Aorta (tissue), 5 donors: ENCODE measurements at regions of chr11 and their contacts with region 1.

Region 1: DNA sequence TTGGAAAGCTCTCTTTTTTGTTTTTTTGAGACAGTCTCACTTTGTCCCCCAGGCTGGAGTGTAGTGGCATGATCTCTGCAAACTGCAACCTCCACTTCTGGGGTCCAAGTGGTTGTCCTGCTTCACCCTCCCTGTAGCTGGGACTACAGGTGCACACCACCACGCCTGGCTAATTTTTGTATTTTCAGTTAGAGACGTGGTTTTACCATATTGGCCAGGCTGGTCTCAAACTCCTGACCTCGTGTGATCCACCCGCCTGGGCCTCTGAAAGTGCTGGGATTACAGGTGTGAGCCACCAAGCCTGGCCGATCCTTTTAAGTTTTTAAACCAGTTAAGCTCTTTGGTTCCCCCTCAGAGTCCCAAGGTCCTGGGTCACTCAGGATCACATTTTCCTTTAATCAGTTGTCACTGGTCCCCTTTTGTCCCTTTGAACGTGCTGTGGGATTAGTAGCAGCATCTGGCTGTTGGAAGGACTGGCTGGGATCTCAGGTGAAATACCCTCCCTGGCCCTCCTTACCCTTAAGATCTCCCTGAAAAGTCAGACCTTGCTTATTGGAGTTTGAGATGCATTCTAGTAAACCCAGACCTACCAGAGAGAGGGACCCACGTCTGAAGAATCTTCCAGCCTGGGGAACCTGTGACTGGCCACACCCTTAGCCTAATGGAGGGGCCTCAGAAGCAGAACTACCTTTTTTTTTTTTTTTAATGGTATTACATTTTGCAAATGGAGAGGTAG is 8.1 kb downstream of the MALAT1 start:
- DNase-seq: peak; percentile 69 to 78
- ATAC-seq: peak; percentile 53
- H3K4me3 ChIP-seq: no peak overlapping the region
- H3K27ac ChIP-seq: peak overlapping the region; percentile 50 to 59
- H3K4me1 ChIP-seq: peaks cover 0 to 2% of the 10 kb centered on the region in 2 donors
- H3K27me3 ChIP-seq: no peaks in the 10 kb centered on the region

Region 2: DNA sequence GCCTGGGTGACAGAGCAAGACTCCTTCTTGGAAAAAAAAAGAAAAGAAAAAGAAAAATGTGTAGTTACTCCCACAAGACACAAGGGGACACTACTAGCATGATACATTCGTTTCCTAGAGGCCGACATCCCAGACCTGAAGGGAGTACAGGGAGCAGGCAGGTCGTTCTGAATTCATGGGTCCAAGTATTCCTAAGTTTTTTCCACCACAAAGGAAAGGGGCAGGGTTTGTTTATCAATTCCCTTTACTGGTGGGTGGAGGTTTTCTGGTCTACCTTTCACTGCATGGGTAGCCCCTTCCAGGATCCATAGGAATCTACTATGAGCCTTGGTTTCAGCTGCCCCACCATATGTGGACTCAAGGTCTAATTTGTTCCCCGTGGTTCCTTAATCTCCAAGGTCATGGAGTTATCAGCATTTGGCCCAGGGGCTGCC is 140.6 kb before region 1 on chr11:
- intact Hi-C with region 1: loop called in 1 of 2 experiments (anchors 2 kb)
- DNase-seq: no peak
- ATAC-seq: peak; percentile 79
- H3K4me3 ChIP-seq: no peak overlapping the region
- H3K27ac ChIP-seq: no peak overlapping the region
- H3K4me1 ChIP-seq: no peaks in the 10 kb centered on the region
- H3K27me3 ChIP-seq: no peaks in the 10 kb centered on the region

Region 3: GRCh38 chr11:65425971-65426838 is 80.7 kb before region 1 on chr11:
- intact Hi-C with region 1: loop called in 1 of 2 experiments (anchors 2 kb)
- DNase-seq: no peak
- ATAC-seq: no peak
- H3K4me3 ChIP-seq: peak overlapping the region; percentile 83 to 97
- H3K27ac ChIP-seq: peak overlapping the region in 1 of 2 donors; percentile 28
- H3K4me1 ChIP-seq: no peaks in the 10 kb centered on the region
- H3K27me3 ChIP-seq: peaks cover 0 to 1% of the 10 kb centered on the region in 2 donors

Region 4: DNA sequence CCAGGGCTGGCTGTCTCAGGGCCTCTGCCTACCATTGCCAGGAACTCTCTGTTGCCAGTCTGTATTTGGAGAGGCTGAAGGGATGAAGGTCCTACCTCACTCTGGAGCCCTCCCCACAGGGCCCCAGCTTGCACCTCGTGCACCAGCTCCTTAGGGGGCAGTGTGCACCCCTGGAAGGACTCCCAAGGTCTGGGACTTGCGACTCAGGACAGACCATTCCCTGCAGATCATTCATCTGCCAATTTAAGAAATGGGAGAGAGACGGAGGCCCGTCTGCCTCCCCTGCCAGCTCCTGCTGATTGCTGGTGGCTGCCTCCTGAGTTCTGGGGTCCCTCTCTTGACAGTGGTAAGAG is 35.6 kb before region 1 on chr11:
- intact Hi-C with region 1: loop called (anchors 5 kb)
- DNase-seq: peak; percentile 84 to 91
- ATAC-seq: peak; percentile 91
- H3K4me3 ChIP-seq: no peak overlapping the region
- H3K27ac ChIP-seq: peak overlapping the region; percentile 97 to 98
- H3K4me1 ChIP-seq: no peaks in the 10 kb centered on the region
- H3K27me3 ChIP-seq: no peaks in the 10 kb centered on the region